ENCODE measurements at regions of chr2 and their contacts with region 1.

Region 1: GRCh38 chr2:35410431-35411061 is 945.0 kb upstream of the CRIM1 start:
- DNase-seq: peak; percentile 62
- H3K4me3 Mint-ChIP-seq: no peak overlapping the region
- H3K27ac Mint-ChIP-seq: no peak overlapping the region
- H3K4me1 Mint-ChIP-seq: no peaks in the 10 kb centered on the region
- H3K27me3 Mint-ChIP-seq: peaks cover 51% of the 10 kb centered on the region
- CTCF ChIP-seq: peak; percentile 86

Region 2: DNA sequence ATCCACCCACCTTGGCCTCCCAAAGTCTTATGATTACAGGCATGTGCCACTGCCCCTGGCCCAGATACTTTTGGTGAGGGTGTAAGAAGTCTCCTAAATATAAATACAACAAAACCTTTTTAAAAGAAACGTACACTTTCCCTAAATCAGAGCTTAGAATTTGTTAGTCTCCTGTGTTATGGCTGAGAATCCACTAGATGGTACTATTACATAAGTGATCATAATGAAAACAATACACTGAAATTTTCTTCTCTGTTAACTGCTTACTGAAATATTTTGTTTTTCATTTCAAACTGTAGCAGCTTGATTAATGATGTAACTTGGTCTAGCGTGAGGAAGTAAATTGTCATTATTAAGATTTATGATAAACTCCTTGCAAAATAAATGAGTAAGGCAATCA is 1736.6 kb before region 1 on chr2:
- CTCF ChIA-PET with region 1: interaction called, 15 read pairs
- POLR2A ChIA-PET with region 1: no interaction called
- intact Hi-C with region 1: loop called (anchors 5 kb)
- DNase-seq: peak; percentile 18
- H3K4me3 Mint-ChIP-seq: no peak overlapping the region
- H3K27ac Mint-ChIP-seq: no peak overlapping the region
- H3K4me1 Mint-ChIP-seq: no peaks in the 10 kb centered on the region
- H3K27me3 Mint-ChIP-seq: no peaks in the 10 kb centered on the region
- CTCF ChIP-seq: peak; percentile 40

Region 3: GRCh38 chr2:34096562-34097171 is 1313.9 kb before region 1 on chr2:
- CTCF ChIA-PET with region 1: interaction called, 10 read pairs
- POLR2A ChIA-PET with region 1: no interaction called
- intact Hi-C with region 1: loop called (anchors 5 kb)
- DNase-seq: peak; percentile 75
- H3K4me3 Mint-ChIP-seq: no peak overlapping the region
- H3K27ac Mint-ChIP-seq: no peak overlapping the region
- H3K4me1 Mint-ChIP-seq: peaks cover 5% of the 10 kb centered on the region
- H3K27me3 Mint-ChIP-seq: no peaks in the 10 kb centered on the region
- CTCF ChIP-seq: peak; percentile 71

Region 4: GRCh38 chr2:35168354-35168753 is 242.2 kb before region 1 on chr2:
- CTCF ChIA-PET with region 1: interaction called, 6 read pairs
- POLR2A ChIA-PET with region 1: no interaction called
- intact Hi-C with region 1: loop called (anchors 2 kb)
- DNase-seq: peak; percentile 9
- H3K4me3 Mint-ChIP-seq: no peak overlapping the region
- H3K27ac Mint-ChIP-seq: no peak overlapping the region
- H3K4me1 Mint-ChIP-seq: no peaks in the 10 kb centered on the region
- H3K27me3 Mint-ChIP-seq: peaks cover 69% of the 10 kb centered on the region
- CTCF ChIP-seq: peak; percentile 31

Region 5: DNA sequence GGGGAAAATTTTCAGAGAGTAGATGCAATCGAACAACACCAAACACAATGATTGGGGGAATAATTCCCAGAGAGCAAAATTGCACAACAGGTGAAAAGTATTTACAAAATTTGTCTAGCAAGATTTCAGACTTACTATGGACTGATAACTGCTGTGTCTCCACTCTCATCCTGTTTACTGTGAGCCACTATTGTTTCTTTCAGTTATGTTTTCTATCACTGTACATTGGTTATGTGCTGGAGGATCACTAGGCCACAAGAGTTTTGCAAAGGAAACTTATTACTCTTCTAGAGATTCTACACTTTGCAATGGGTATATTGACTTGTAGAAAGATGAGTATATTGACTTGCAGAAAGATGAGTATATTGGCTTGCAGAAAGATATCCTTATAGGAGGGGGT is 10.9 kb after region 1 on chr2:
- CTCF ChIA-PET with region 1: interaction called, 13 read pairs
- POLR2A ChIA-PET with region 1: no interaction called
- intact Hi-C with region 1: no loop called
- DNase-seq: no peak
- H3K4me3 Mint-ChIP-seq: no peak overlapping the region
- H3K27ac Mint-ChIP-seq: no peak overlapping the region
- H3K4me1 Mint-ChIP-seq: no peaks in the 10 kb centered on the region
- H3K27me3 Mint-ChIP-seq: peaks cover 52% of the 10 kb centered on the region
- CTCF ChIP-seq: no peak

Region 6: DNA sequence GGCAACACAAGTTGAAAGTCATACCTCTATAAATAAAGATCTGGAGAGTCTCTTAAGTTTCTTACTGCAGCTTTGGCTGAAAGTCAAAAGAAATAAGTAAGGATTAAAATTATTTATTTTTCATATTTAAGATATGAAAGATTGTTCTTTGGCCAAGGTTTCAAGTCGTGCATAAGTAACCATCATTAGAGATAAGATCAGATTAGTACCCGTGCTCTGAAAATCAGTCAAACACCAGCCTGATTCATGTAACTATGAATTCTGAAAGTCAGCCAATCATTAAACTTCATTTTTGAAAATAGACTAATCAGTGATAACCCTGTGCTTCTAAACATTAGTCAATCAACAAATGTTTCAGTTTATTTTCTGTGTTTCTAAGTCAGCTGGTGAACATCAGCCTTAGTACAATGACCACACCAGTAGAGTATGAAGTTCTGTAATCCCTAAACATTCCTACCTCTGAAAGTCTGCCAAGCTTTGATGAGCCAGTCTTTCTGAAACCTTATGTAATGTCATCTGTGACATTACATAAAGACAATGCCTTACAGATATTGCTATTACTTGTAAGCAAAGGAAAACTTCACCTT is 137.5 kb after region 1 on chr2:
- CTCF ChIA-PET with region 1: no interaction called
- POLR2A ChIA-PET with region 1: no interaction called
- intact Hi-C with region 1: no loop called
- DNase-seq: peak; percentile 19
- H3K4me3 Mint-ChIP-seq: no peak overlapping the region
- H3K27ac Mint-ChIP-seq: no peak overlapping the region
- H3K4me1 Mint-ChIP-seq: no peaks in the 10 kb centered on the region
- H3K27me3 Mint-ChIP-seq: no peaks in the 10 kb centered on the region
- CTCF ChIP-seq: no peak

Measured in MCF 10A (cell line).